ENCODE measurements at regions of chrX and their contacts with region 1.

Region 1: DNA sequence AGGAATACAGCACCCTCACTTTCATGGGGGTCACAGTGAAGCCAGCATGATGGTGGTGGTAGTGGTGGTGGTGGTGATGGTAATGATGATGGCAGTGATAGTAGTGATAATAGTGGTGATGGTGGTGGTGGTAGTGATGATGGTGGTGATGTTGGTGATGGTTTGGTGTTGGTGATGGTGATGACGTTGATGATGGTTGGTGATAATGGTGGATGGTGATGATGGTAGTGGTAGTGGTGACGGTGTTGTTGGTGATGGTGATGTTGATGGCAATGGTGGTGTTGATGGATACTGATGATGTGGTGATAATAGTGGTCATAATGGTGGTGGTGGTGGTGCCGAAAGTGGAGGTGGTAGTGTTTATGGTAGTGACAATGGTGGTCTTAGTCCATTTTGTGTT is 280.2 kb upstream of the STS start:
- DNase-seq: no peak
- ATAC-seq: no peak
- H3K4me3 ChIP-seq: no peak overlapping the region
- H3K27ac ChIP-seq: no peak overlapping the region
- H3K4me1 ChIP-seq: no peaks in the 10 kb centered on the region
- H3K27me3 ChIP-seq: no peaks in the 10 kb centered on the region
- CTCF ChIP-seq: no peak
- POLR2A ChIP-seq: no peak

Region 2: DNA sequence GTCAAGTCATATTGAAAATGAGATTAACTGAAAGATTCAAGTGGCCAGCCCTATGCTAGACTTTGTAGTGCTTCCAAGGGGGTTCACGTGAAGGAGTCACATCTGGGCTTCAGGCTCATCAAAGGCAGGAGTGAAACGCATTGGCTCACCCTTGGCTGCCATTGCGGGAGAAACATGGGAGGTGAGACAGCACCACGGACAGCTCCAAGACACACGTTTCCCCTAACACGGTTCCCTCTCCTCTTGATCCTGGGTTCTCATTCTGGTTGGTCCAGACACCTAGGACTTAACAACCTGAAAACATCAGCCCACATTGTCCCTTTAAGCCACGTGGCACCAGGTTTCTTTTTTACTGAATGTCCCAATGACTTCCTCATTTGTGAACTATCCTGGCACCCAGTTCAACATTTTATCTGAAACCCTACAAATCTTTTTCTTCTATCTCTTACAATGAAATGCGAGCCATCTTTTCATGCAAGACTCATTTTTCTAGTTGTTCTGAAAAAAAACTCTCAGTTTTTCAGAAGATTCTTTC is 53.5 kb before region 1 on chrX:
- in situ Hi-C with region 1: loop called in 1 of 4 experiments (anchors 10 kb)
- intact Hi-C with region 1: no loop called
- DNase-seq: no peak
- ATAC-seq: no peak
- H3K4me3 ChIP-seq: no peak overlapping the region
- H3K27ac ChIP-seq: no peak overlapping the region
- H3K4me1 ChIP-seq: no peaks in the 10 kb centered on the region
- H3K27me3 ChIP-seq: no peaks in the 10 kb centered on the region
- CTCF ChIP-seq: no peak
- POLR2A ChIP-seq: no peak

Region 3: GRCh38 chrX:6832619-6833018 is 34.7 kb before region 1 on chrX:
- in situ Hi-C with region 1: no loop called
- intact Hi-C with region 1: no loop called
- DNase-seq: no peak
- ATAC-seq: no peak
- H3K4me3 ChIP-seq: no peak overlapping the region
- H3K27ac ChIP-seq: no peak overlapping the region
- H3K4me1 ChIP-seq: no peaks in the 10 kb centered on the region
- H3K27me3 ChIP-seq: no peaks in the 10 kb centered on the region
- CTCF ChIP-seq: no peak
- POLR2A ChIP-seq: no peak

Region 4: GRCh38 chrX:6994416-6994815 is 127.1 kb after region 1 on chrX:
- in situ Hi-C with region 1: no loop called
- intact Hi-C with region 1: no loop called
- DNase-seq: no peak
- ATAC-seq: no peak
- H3K4me3 ChIP-seq: no peak overlapping the region
- H3K27ac ChIP-seq: no peak overlapping the region
- H3K4me1 ChIP-seq: no peaks in the 10 kb centered on the region
- H3K27me3 ChIP-seq: no peaks in the 10 kb centered on the region
- CTCF ChIP-seq: no peak
- POLR2A ChIP-seq: no peak